Activated CD4-positive, alpha-beta T cell treated with anti-CD3 and anti-CD28 coated beads, Interleukin-2, amount 10 ng/mL, durations not matched to agents 24 days and 14 days (primary cell): ENCODE measurements at regions of chr11 and their contacts with region 1.

Region 1: GRCh38 chr11:2930704-2931428 is 1.6 kb upstream of the PHLDA2 start:
- DNase-seq: peak; percentile 83
- H3K4me3 Mint-ChIP-seq: peak overlapping the region; percentile 92
- H3K27ac Mint-ChIP-seq: peak overlapping the region; percentile 89
- H3K4me1 Mint-ChIP-seq: peaks cover 29% of the 10 kb centered on the region
- H3K27me3 Mint-ChIP-seq: peaks cover 18% of the 10 kb centered on the region

Region 2: DNA sequence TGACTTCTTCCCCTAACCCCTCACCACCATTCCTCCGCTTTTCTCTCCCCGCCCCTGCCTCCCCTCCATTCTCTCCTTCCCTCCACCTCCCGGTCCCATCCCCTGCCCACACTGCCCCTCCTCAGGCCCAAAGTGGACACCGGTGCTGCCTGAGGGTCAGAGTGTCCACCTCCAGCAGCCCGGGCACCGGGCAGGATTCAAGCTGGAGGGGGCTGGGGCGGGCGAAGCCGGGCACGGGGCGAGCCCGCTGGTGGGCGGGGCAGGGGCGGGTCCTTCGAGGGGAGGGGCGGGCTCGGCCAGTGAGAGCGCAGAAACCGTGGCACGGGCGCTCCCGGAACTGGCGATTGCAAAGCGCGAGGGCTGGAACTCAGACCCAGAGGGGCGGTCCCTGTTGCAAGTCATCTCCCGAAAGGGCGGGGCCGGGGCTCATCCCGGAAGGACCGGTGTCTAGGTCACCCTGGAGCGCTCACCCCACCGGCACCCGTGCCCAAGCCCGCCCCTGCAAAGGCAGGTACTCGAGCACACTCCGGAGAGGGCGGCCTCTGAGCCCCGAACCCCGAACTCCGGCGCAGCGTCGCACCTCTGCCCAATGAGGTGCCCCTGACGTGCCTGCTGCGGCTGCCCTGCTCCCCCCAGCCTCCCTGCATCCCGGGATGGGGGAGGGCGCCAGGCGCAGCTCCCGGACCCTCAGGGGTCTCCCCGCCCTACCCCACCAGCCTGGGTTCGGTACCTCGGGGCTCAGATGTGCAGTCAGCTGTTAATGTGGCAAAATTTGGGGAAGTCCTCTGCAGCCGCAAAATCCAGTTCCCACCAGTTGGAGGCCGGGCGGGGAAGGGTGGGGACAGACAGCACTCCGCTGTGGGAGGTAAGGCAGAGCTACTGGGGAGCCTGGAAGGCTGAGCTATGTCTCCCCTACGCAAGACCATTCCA is 28.7 kb before region 1 on chr11:
- intact Hi-C with region 1: loop called (anchors 1 kb)
- DNase-seq: peak; percentile 98
- H3K4me3 Mint-ChIP-seq: peak overlapping the region; percentile 80
- H3K27ac Mint-ChIP-seq: peak overlapping the region; percentile 72
- H3K4me1 Mint-ChIP-seq: peaks cover 32% of the 10 kb centered on the region
- H3K27me3 Mint-ChIP-seq: no peaks in the 10 kb centered on the region